Activated T-helper 1 cell treated with anti-CD3 and anti-CD28 coated beads, Interleukin-12 subunit alpha, Interleukin-12 subunit beta, Interleukin-2, Interleukin-4 antibody, amounts not matched to agents 30 ng/mL and 10 ng/mL and 1 ng/mL, durations not matched to agents 14 hours and 24 hours and 36 hours (primary cell): ENCODE measurements at regions of chr12 and their contacts with region 1.

Region 1: GRCh38 chr12:21501379-21501956 is at the starts of genes GOLT1B and RECQL:
- DNase-seq: peak; percentile 90
- H3K4me3 Mint-ChIP-seq: no peak within 1 kb of the TSS
- H3K27ac Mint-ChIP-seq: peak within 1 kb of the TSS; percentile 8
- H3K4me1 Mint-ChIP-seq: peaks cover 49% of the 10 kb centered on the region
- H3K27me3 Mint-ChIP-seq: no peaks in the 10 kb centered on the region
- total RNA-seq, gene GOLT1B: 42.6 and 46.5 TPM in 2 replicates
- total RNA-seq, gene RECQL: 56.4 and 60.6 TPM in 2 replicates

Region 2: GRCh38 chr12:20547816-20548575 is 953.5 kb before region 1 on chr12:
- intact Hi-C with region 1: no loop called
- DNase-seq: no peak
- H3K4me3 Mint-ChIP-seq: no peak overlapping the region
- H3K27ac Mint-ChIP-seq: no peak overlapping the region
- H3K4me1 Mint-ChIP-seq: no peaks in the 10 kb centered on the region
- H3K27me3 Mint-ChIP-seq: no peaks in the 10 kb centered on the region

Region 3: DNA sequence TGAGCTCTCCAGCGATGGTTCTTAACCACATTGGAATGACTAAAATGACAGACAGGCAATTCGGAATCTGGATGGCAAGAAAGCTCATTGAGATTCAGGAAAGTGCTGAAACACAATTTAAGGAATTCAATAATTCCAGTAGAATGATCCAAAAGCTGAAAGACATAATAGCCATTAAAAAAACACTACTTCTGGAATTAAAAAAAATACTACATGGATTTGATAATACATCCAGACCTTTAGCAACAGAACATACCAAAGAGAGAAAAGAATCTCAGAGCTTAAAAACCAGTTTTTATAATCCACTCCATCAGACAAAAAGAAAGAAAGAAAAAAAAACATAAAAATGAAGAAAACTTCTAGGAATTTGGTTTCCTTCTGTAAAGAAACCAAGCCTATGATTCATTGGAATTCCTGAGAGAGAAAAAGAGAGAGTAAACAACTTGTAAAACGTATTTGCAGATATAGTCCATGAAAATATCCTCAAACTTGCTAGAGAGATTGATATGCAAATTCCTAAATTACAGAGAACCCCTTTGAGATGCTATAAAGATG is 317.7 kb before region 1 on chr12:
- intact Hi-C with region 1: no loop called
- DNase-seq: no peak
- H3K4me3 Mint-ChIP-seq: no peak overlapping the region
- H3K27ac Mint-ChIP-seq: no peak overlapping the region
- H3K4me1 Mint-ChIP-seq: no peaks in the 10 kb centered on the region
- H3K27me3 Mint-ChIP-seq: no peaks in the 10 kb centered on the region

Region 4: GRCh38 chr12:21438643-21439042 is 62.8 kb before region 1 on chr12:
- intact Hi-C with region 1: loop called (anchors 1 kb)
- DNase-seq: no peak
- H3K4me3 Mint-ChIP-seq: peak overlapping the region; percentile 95
- H3K27ac Mint-ChIP-seq: peak overlapping the region; percentile 95
- H3K4me1 Mint-ChIP-seq: peaks cover 41% of the 10 kb centered on the region
- H3K27me3 Mint-ChIP-seq: peaks cover 5% of the 10 kb centered on the region

Region 5: DNA sequence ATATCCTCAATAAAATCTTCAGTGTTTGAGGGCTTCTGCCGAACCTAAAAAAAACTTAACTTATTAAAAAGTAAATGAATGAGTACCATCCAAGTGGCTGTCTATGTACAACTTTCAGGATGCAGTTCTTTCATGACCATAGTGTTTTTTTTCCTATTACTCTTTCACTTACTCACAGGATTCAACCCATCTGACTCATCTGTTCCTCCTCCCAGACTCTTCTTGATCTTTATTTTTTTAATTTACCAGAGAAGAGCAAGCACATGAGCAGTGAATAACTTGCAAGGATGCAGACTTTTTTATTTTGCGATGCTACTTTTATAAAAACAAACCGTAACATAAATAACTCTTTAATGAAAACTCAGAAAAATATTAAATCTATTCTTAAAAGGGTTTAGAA is 24.5 kb before region 1 on chr12:
- intact Hi-C with region 1: loop called (anchors 1 kb)
- DNase-seq: no peak
- H3K4me3 Mint-ChIP-seq: no peak overlapping the region
- H3K27ac Mint-ChIP-seq: peak overlapping the region; percentile 83
- H3K4me1 Mint-ChIP-seq: peaks cover 22% of the 10 kb centered on the region
- H3K27me3 Mint-ChIP-seq: no peaks in the 10 kb centered on the region

Region 6: DNA sequence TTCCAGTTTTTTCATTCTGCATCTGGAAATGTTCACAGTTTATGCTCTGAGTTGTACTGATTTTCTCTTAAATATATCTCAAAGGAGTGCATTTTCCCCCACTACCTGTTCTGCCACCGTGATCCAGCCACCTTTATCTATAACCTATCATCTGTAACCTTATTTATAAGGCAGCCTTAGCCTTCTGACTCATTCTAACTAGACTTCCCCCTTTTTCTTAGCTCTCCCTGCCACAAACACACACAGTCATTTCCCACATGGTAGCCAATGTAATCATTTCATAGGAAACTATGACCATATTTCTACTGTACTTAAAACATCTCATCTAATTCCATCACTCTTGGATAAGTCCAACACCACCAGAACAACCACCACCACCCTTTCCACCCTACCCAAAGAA is 114.0 kb after region 1 on chr12:
- intact Hi-C with region 1: loop called (anchors 1 kb)
- DNase-seq: no peak
- H3K4me3 Mint-ChIP-seq: peak overlapping the region; percentile 46
- H3K27ac Mint-ChIP-seq: peak overlapping the region; percentile 45
- H3K4me1 Mint-ChIP-seq: peaks cover 46% of the 10 kb centered on the region
- H3K27me3 Mint-ChIP-seq: peaks cover 2% of the 10 kb centered on the region

Region 7: GRCh38 chr12:22046090-22046967 is 544.9 kb after region 1 on chr12 and contains the start of gene CMAS:
- intact Hi-C with region 1: loop called (anchors 5 kb)
- DNase-seq: peak; percentile 70
- H3K4me3 Mint-ChIP-seq: peak within 1 kb of the TSS; percentile 95
- H3K27ac Mint-ChIP-seq: peak within 1 kb of the TSS; percentile 88
- H3K4me1 Mint-ChIP-seq: peaks cover 48% of the 10 kb centered on the region
- H3K27me3 Mint-ChIP-seq: no peaks in the 10 kb centered on the region
- total RNA-seq, gene CMAS: 34.1 and 34.9 TPM in 2 replicates

Region 8: DNA sequence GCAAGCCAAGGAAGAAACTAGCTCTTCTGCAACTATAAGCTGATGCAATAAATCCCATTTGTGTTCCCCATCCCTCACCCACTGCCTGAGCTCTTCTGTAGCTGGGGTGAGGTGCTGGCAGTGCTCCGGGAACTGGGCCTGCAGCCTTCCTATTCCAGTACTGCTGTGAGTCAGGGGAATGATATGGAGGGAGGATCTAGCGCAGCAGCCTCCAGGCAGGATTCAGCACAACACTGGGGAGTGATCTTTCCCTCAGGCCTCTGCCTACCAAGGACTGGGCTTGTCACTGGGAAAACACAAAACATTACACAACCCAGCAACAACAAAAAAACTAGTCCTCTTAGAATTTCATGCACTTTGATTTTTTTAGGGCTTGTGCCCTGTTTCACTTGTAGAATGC is 774.4 kb after region 1 on chr12:
- intact Hi-C with region 1: no loop called
- DNase-seq: no peak
- H3K4me3 Mint-ChIP-seq: no peak overlapping the region
- H3K27ac Mint-ChIP-seq: no peak overlapping the region
- H3K4me1 Mint-ChIP-seq: no peaks in the 10 kb centered on the region
- H3K27me3 Mint-ChIP-seq: peaks cover 1% of the 10 kb centered on the region